ENCODE measurements at regions of chr10 and their contacts with region 1.

Region 1: DNA sequence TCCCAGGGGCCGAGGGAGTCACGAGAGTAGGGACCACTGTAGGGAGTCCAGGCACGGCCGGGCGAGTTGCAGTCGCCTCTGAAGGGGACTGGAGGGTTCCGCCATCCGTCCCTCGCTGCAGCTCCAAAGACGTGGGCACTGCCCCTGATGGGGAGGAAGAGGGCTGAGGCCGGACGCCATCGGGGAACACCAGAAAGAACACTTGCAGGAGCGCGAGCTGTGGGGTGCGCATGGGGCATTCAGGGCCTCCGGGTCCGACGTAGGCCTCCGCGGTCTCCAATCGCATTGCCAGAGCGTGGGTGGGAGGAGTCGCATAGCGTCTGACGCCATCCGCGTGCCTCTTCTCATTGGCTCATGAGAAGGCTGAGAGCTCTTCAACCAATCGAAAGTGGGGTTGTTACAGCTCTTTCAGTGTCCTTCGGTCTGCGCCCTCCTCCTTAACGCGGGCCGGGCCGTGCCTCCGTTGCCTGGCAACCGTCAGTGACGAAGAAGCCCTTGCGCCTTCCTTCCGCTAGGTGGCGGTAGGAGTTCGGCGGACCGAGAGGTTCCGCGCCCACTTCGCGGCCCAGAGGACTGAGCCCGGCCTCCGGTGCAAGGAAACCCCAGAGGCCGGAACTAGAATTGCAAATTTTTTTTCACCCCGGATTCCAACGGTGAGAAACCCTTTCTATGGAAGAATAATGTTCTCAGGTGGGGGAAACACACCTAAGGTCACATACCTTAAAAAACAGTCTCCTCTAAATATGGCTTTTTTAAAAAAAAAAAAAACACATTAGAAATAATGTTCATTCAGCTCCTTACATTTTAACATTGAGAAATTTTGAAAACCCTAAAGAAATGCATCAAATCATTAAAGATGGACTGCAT is at the start of gene TCTN3:
- DNase-seq: peak; percentile 97
- H3K4me3 Mint-ChIP-seq: peak within 1 kb of the TSS; percentile 91
- H3K27ac Mint-ChIP-seq: peak within 1 kb of the TSS; percentile 84
- H3K4me1 Mint-ChIP-seq: peaks cover 44% of the 10 kb centered on the region
- H3K27me3 Mint-ChIP-seq: no peaks in the 10 kb centered on the region
- total RNA-seq, gene TCTN3: 26.2 to 28.5 TPM

Region 2: DNA sequence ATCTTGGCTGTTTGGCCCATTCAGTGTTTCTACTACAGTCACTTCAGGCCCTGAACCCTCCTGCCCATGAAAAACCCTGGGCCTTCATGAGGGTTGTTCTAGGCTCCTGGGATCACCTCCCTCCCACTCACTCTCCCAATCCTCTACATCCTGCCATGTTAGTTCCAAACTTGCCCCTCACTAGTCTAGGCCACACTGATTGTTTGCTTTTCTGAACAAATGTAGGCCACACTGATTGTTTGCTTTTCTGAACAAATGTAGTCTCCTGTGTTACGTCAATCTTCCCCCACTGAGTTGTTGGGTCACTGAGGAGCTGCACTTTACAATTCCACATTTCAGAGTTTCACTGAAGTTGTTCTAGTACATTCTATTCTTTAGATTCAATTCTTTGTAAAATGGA is 32.1 kb before region 1 on chr10:
- CTCF ChIA-PET with region 1: interaction called, 16 read pairs
- POLR2A ChIA-PET with region 1: interaction called, 4 read pairs
- DNase-seq: no peak
- H3K4me3 Mint-ChIP-seq: no peak overlapping the region
- H3K27ac Mint-ChIP-seq: no peak overlapping the region
- H3K4me1 Mint-ChIP-seq: peaks cover 4% of the 10 kb centered on the region
- H3K27me3 Mint-ChIP-seq: no peaks in the 10 kb centered on the region

Region 3: DNA sequence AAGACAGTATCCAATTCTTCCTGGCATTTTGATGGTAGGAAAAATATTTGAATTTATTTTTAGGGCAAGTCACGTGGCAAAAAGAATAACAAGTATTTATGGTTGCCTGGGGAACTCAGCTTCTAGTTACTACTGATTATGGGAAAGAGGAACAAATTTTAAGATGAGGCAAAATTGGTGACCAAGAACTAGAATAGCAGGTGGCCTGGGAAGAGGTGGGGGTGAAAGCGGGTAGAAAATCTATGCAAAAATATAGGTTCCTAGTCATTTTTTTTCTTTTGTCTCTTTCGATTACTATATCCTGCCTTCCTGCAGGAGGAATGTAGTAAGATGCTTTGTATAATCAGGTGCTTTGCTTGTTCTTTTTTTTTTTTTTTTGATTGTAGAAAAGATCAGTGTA is 89.8 kb after region 1 on chr10:
- CTCF ChIA-PET with region 1: interaction called, 30 read pairs
- POLR2A ChIA-PET with region 1: interaction called, 3 read pairs
- DNase-seq: no peak
- H3K4me3 Mint-ChIP-seq: no peak overlapping the region
- H3K27ac Mint-ChIP-seq: no peak overlapping the region
- H3K4me1 Mint-ChIP-seq: peaks cover 60% of the 10 kb centered on the region
- H3K27me3 Mint-ChIP-seq: peaks cover 13% of the 10 kb centered on the region

Region 4: GRCh38 chr10:95864906-95865813 is 171.3 kb after region 1 on chr10:
- CTCF ChIA-PET with region 1: interaction called, 190 read pairs
- POLR2A ChIA-PET with region 1: interaction called, 30 read pairs
- DNase-seq: peak; percentile 62
- H3K4me3 Mint-ChIP-seq: no peak overlapping the region
- H3K27ac Mint-ChIP-seq: peak overlapping the region; percentile 69
- H3K4me1 Mint-ChIP-seq: peaks cover 55% of the 10 kb centered on the region
- H3K27me3 Mint-ChIP-seq: no peaks in the 10 kb centered on the region

Region 5: GRCh38 chr10:95907456-95908253 is 213.8 kb after region 1 on chr10 and contains the start of gene CC2D2B:
- CTCF ChIA-PET with region 1: interaction called, 26 read pairs
- POLR2A ChIA-PET with region 1: interaction called, 8 read pairs
- DNase-seq: peak; percentile 70
- H3K4me3 Mint-ChIP-seq: peak within 1 kb of the TSS; percentile 87
- H3K27ac Mint-ChIP-seq: peak within 1 kb of the TSS; percentile 76
- H3K4me1 Mint-ChIP-seq: peaks cover 15% of the 10 kb centered on the region
- H3K27me3 Mint-ChIP-seq: peaks cover 14% of the 10 kb centered on the region
- total RNA-seq, gene CC2D2B: 0.35 to 0.40 TPM

Region 6: GRCh38 chr10:96129387-96130325 is 435.8 kb after region 1 on chr10 and contains the start of gene ZNF518A:
- CTCF ChIA-PET with region 1: interaction called, 10 read pairs
- POLR2A ChIA-PET with region 1: interaction called, 5 read pairs
- DNase-seq: peak; percentile 90
- H3K4me3 Mint-ChIP-seq: peak within 1 kb of the TSS; percentile 91
- H3K27ac Mint-ChIP-seq: peak within 1 kb of the TSS; percentile 99
- H3K4me1 Mint-ChIP-seq: peaks cover 29% of the 10 kb centered on the region
- H3K27me3 Mint-ChIP-seq: peaks cover 23% of the 10 kb centered on the region
- total RNA-seq, gene ZNF518A: 16.0 to 16.2 TPM

Measured in activated CD4-positive, alpha-beta memory T cell treated with anti-CD3 and anti-CD28 coated beads, Interleukin-2, amount 10 ng/mL, durations not matched to agents 7 days and 5 days (primary cell).